ENCODE measurements at regions of chr2 and their contacts with region 1.

Region 1: DNA sequence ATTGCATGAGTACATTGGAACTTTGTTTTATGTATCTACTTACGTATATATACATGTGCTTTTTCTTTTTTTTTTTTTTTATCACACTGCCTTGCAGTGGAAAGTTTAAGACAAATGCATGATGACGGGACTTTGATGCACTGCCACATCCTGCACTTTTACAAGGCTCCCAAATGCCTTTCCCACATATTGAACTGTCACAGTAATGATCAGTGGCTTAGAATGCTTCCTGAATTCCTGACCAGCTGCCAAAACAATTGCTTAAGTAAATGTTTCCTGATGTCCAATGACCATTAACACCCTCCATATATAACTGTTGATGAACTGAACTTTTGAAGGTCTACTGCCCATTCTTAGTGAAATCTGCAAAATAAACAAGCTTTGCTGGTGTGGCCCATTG is 60.2 kb downstream of the LYPD6B start:
- DNase-seq: no peak
- H3K4me3 ChIP-seq: no peak overlapping the region
- H3K27ac ChIP-seq: no peak overlapping the region
- H3K4me1 ChIP-seq: peaks cover 8% of the 10 kb centered on the region
- H3K27me3 ChIP-seq: no peaks in the 10 kb centered on the region
- CTCF ChIP-seq: no peak

Region 2: DNA sequence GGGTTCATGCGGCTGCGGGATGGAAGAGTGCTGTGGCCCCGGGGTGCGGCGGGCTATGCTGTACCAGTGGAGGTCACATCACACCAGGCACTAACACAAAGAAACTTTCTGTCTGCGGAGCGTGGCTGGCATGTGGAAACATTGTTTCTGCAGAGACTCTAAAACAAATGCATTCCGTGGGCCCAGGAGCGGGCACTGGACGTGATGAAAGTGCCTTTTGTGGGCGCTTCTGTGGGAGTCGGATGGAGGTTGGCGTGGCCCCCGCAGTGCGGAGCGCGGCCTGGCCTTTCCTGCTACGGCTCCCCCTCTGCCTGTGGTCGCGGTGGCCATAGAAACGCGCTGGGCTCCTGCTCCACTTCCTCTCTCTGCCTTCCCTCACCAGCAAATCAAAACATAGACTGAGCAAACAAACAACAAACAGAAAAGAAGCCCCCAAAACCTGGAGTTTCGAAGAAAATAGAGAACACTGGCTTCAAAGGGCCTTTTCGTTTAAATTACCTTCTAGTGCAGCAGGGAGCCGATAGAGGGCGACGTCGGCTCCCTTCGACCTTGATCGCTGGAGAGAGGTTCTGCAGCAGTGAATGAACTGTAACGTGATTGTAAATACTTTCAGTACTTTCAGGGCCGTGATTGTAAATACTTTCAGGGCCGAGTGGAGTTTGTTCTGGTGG is 172.3 kb before region 1 on chr2:
- CTCF ChIA-PET with region 1: no interaction called
- dilution Hi-C with region 1: no loop called
- in situ Hi-C with region 1: no loop called
- intact Hi-C with region 1: no loop called
- DNase-seq: no peak
- H3K4me3 ChIP-seq: no peak overlapping the region
- H3K27ac ChIP-seq: no peak overlapping the region
- H3K4me1 ChIP-seq: no peaks in the 10 kb centered on the region
- H3K27me3 ChIP-seq: no peaks in the 10 kb centered on the region
- CTCF ChIP-seq: peak; percentile 12 to 14

Region 3: GRCh38 chr2:149136111-149136510 is 37.4 kb after region 1 on chr2:
- CTCF ChIA-PET with region 1: no interaction called
- dilution Hi-C with region 1: no loop called
- in situ Hi-C with region 1: no loop called
- intact Hi-C with region 1: loop called (anchors 2 kb)
- DNase-seq: no peak
- H3K4me3 ChIP-seq: no peak overlapping the region
- H3K27ac ChIP-seq: no peak overlapping the region
- H3K4me1 ChIP-seq: no peaks in the 10 kb centered on the region
- H3K27me3 ChIP-seq: no peaks in the 10 kb centered on the region
- CTCF ChIP-seq: no peak

Region 4: DNA sequence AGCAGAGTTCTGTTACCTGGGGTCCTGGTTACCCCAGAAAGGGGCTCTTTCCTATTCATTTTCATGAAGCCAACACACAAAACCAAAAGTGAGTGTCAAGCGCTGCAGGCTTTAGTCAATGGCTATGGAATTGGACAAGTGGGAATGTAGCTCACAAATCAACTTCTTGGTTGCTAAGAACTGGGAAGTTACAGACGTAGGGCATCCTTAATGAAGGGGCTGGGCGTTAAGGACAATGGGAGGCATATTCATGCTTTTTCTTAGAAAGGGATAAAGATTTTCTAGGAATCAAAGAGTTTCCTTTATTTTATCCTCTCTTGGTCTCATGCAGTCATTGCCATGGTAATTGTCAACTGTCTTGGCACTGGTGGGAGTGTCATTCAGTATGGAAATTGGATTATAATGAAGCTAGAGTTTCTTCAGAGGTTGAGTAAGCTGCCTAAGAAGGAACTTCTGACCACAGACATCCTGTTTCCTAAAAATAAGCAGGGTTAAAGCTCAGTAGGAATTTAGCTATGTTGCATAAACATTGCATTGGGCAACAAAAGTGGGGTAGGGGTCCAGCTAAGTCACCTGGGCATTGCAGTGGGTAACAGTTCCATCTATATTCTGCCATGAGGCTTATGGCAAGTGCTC is 53.8 kb after region 1 on chr2:
- CTCF ChIA-PET with region 1: no interaction called
- dilution Hi-C with region 1: no loop called
- in situ Hi-C with region 1: no loop called
- intact Hi-C with region 1: no loop called
- DNase-seq: no peak
- H3K4me3 ChIP-seq: no peak overlapping the region
- H3K27ac ChIP-seq: no peak overlapping the region
- H3K4me1 ChIP-seq: no peaks in the 10 kb centered on the region
- H3K27me3 ChIP-seq: no peaks in the 10 kb centered on the region
- CTCF ChIP-seq: no peak